ENCODE measurements at regions of chr3 and their contacts with region 1.

Region 1: GRCh38 chr3:187738331-187739093 is 6.8 kb downstream of the BCL6 start:
- DNase-seq: peak; percentile 93
- ATAC-seq: peak; percentile 63
- H3K4me3 ChIP-seq: peak overlapping the region; percentile 46
- H3K27ac ChIP-seq: peak overlapping the region; percentile 87
- H3K4me1 ChIP-seq: peaks cover 20% of the 10 kb centered on the region
- H3K27me3 ChIP-seq: no peaks in the 10 kb centered on the region
- CTCF ChIP-seq: peak; percentile 77
- POLR2A ChIP-seq: peak; percentile 48; the same call in 1 of the 2 replicates
- RAD21 ChIP-seq: peak; percentile 91

Region 2: GRCh38 chr3:188052169-188053030 is 313.9 kb after region 1 on chr3:
- CTCF ChIA-PET with region 1: interaction called, 3 read pairs
- POLR2A ChIA-PET with region 1: no interaction called
- dilution Hi-C with region 1: no loop called
- in situ Hi-C with region 1: no loop called
- intact Hi-C with region 1: loop called (anchors 5 kb)
- DNase-seq: peak; percentile 32
- ATAC-seq: peak; percentile 85
- H3K4me3 ChIP-seq: no peak overlapping the region
- H3K27ac ChIP-seq: no peak overlapping the region
- H3K4me1 ChIP-seq: peaks cover 7% of the 10 kb centered on the region
- H3K27me3 ChIP-seq: no peaks in the 10 kb centered on the region
- CTCF ChIP-seq: 0 out of 2 replicates have a peak, but pooled peaks have one; percentile 26
- POLR2A ChIP-seq: no peak
- RAD21 ChIP-seq: peak; percentile 35

Region 3: GRCh38 chr3:188262913-188263683 is 524.6 kb after region 1 on chr3:
- CTCF ChIA-PET with region 1: interaction called, 4 read pairs
- POLR2A ChIA-PET with region 1: interaction called, 4 read pairs
- dilution Hi-C with region 1: no loop called
- in situ Hi-C with region 1: loop called (anchors 10 kb)
- intact Hi-C with region 1: loop called (anchors 1 kb)
- DNase-seq: peak; percentile 83
- ATAC-seq: peak; percentile 16
- H3K4me3 ChIP-seq: no peak overlapping the region
- H3K27ac ChIP-seq: peak overlapping the region; percentile 37
- H3K4me1 ChIP-seq: peaks cover 44% of the 10 kb centered on the region
- H3K27me3 ChIP-seq: no peaks in the 10 kb centered on the region
- CTCF ChIP-seq: no peak
- POLR2A ChIP-seq: no peak
- RAD21 ChIP-seq: no peak

Region 4: GRCh38 chr3:188627652-188628051 is 889.1 kb after region 1 on chr3:
- CTCF ChIA-PET with region 1: no interaction called
- POLR2A ChIA-PET with region 1: no interaction called
- dilution Hi-C with region 1: no loop called
- in situ Hi-C with region 1: no loop called
- intact Hi-C with region 1: loop called (anchors 2 kb)
- DNase-seq: peak; percentile 94
- ATAC-seq: peak; percentile 67
- H3K4me3 ChIP-seq: no peak overlapping the region
- H3K27ac ChIP-seq: peak overlapping the region; percentile 82; the same call in 1 of the 2 replicates
- H3K4me1 ChIP-seq: peaks cover 19% of the 10 kb centered on the region
- H3K27me3 ChIP-seq: no peaks in the 10 kb centered on the region
- CTCF ChIP-seq: no peak
- POLR2A ChIP-seq: no peak
- RAD21 ChIP-seq: no peak

Region 5: DNA sequence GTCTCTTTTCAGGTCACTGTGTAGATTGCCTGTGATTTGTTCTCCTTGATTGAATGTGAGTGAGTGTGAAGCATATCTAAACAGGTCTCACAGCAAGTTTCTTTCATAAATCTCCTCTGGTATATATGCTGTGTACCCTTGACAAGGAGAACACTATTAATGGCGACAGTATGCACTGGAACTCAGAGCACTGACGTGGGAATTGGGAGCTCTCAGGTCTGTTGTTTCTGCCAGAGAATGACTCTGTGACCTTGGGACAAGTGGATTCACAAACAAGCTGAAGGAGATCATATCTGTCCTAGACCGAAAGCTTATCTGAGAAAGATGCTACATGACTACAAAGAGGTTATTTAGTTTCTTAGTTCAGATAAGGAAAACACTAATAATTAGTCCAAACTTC is 1107.0 kb after region 1 on chr3:
- CTCF ChIA-PET with region 1: no interaction called
- POLR2A ChIA-PET with region 1: interaction called, 13 read pairs
- dilution Hi-C with region 1: no loop called
- in situ Hi-C with region 1: no loop called
- intact Hi-C with region 1: no loop called
- DNase-seq: no peak
- ATAC-seq: no peak
- H3K4me3 ChIP-seq: no peak overlapping the region
- H3K27ac ChIP-seq: no peak overlapping the region
- H3K4me1 ChIP-seq: peaks cover 5% of the 10 kb centered on the region
- H3K27me3 ChIP-seq: no peaks in the 10 kb centered on the region
- CTCF ChIP-seq: no peak
- POLR2A ChIP-seq: no peak
- RAD21 ChIP-seq: no peak

Region 6: DNA sequence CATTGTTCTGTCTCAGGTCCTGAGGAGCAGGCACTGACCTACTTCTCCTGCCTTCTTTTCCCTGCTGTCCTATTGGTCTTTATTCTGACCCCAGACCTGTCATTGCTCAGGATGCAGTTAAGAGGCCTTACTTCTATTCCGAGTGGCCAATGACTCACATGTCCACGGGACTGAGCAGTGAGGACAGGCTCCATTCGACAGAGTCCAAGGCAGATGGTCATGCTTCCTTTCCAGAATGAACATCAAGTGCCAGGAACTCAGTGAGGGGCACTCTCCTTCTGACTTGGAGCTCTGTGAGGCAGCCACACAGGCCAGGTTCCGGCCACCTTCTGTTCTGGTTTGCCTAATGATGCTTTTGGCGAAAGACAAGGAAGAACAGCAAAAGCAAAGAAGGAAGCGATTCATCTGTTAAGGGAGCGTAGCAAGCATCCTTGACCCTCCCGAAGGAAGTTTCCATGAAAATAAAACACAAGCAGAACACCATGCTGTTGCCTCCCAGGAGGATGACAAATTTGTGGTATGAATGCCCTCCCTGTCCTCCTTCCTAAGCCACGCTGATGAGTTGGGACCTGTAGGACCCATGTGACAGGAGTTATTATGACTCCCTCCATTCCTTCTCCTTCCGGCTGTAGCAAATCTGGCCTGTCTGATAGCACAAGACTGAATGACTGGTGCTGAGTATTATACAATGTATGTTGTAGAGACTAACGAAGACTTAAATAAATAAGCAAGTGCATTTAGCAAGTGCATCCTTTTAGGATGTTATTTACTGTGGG is 1418.9 kb after region 1 on chr3:
- CTCF ChIA-PET with region 1: no interaction called
- POLR2A ChIA-PET with region 1: no interaction called
- dilution Hi-C with region 1: no loop called
- in situ Hi-C with region 1: loop called (anchors 10 kb)
- intact Hi-C with region 1: no loop called
- DNase-seq: no peak
- ATAC-seq: no peak
- H3K4me3 ChIP-seq: no peak overlapping the region
- H3K27ac ChIP-seq: no peak overlapping the region
- H3K4me1 ChIP-seq: no peaks in the 10 kb centered on the region
- H3K27me3 ChIP-seq: peaks cover 26% of the 10 kb centered on the region
- CTCF ChIP-seq: no peak
- POLR2A ChIP-seq: no peak
- RAD21 ChIP-seq: no peak

Measured in IMR-90 (cell line).